ENCODE measurements at regions of chr1 and their contacts with region 1.

Region 1: DNA sequence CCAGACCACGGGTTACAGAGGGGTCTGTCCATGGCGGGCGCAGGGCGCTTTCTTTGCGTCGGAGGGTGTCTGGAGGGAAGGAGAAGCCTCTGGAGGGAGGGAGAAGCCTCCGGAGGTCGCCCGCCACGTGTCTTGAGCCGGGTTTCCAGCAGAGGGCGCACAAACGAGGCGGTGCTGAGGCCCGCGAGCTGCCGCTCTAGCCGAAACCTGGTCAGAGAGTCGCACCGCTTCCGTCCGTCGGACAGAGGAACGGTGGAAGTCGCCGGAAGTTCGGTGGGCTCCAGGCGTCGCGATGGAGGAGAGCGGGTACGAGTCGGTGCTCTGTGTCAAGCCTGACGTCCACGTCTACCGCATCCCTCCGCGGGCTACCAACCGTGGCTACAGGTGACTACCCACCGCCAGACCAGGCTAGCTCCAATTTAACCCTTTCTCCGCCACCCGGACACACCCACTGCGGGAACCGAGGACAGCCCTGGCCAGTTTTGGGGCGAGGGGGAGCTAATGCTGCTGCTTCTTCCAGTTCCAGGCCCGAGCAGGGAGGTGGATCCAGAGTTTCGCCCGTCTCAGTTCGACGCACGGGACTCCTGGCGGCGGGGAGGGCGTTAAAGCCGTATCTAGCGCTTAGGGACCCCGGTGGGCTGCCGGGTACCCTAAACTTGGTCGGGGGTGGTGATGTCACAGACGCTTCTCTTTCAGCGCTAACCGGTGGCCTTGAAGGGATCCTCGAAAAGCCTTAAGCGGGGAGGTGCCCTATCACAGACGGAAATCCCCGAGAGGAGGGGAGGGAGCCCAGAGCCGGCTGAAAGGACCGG is at the start of gene NECAP2:
- DNase-seq: peak; percentile 85 to 96 (median 92)
- H3K4me3 ChIP-seq: peak within 1 kb of the TSS; percentile 66 to 99 (median 92)
- H3K27ac ChIP-seq: peak within 1 kb of the TSS; percentile 38 to 97 (median 80)
- H3K27me3 ChIP-seq: no peaks in the 10 kb centered on the region
- CTCF ChIP-seq: peak; percentile 68 to 99 (median 95)
- total RNA-seq, gene NECAP2: 14.6 to 37.1 (median 23.5) TPM

Region 2: DNA sequence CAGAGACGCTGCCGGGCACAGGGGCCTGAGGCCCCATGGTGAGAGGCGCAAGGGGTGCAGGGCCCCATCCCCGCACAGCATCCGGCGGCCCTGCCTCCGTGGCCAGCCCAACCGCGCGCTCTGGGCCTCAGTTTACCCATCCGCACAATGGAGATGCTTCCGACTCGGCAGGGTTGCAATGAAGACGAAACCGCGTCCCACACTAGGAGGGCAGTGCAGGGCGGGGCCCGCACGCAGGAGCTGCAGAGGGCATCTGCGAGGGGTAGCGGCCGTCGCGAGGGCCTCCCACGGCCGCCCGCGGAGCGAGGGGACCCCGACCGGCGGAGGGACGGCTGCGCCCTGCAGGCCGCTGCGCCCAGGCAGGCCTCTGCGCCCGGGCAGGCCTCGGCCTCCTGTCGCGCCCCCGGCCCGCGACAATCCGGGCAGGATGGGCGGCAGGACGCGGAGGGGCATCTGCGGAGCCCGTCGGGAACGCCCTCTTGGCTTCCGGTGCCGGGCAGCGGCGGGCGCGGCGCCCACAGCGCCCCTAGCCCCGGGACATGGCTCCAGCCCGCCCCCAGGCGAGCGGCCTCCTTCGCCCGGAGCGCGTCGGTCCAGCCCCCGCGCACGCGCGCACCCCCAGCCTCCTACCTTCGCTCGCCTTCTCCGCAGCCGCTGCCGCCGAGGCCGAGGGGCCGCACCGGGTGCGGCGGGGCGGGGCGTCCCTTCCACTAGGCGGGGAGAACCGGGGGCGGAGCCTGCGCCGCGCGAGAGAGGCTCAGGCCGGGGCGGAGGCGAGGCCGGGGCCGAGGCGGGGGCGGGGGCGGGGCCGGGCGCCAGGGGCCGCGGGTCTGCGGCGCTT is 58.1 kb after region 1 on chr1:
- intact Hi-C with region 1: loop called in 1 of 2 experiments (anchors 5 kb)
- DNase-seq: peak; percentile 73 to 91 (median 86)
- H3K4me3 ChIP-seq: peak overlapping the region; percentile 59 to 94 (median 83)
- H3K27ac ChIP-seq: peak overlapping the region; percentile 66 to 98 (median 92)
- H3K27me3 ChIP-seq: no peaks in the 10 kb centered on the region
- CTCF ChIP-seq: peak in 33 of 56 donors; percentile 7 to 63 (median 24)